ENCODE measurements at regions of chr2 and their contacts with region 1.

Region 1: DNA sequence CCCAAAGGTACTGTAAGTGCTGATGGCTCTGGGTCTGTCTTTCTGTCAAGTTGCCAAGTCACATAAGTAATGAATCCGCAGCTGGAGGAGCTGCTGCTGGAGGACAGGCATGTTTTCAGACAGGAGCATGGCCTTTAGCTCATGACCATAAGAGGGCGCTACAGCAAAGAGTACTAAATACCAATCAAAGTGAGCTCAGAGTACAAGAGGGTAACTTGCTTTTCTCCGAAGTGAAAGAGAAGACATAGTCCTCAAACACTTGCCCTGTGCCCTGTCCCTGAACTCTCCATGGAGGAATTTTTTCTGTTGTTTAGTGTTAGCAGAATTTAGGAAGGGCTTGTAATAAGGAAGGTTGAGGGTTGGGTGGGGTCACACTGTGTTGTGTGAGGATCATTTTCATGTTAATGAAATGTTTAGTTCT is 58.0 kb upstream of the EML6 start:
- DNase-seq: peak; percentile 41 to 63 (median 58)
- H3K4me3 ChIP-seq: no peak overlapping the region
- H3K4me3 Mint-ChIP-seq: no peak overlapping the region
- H3K27ac ChIP-seq: no peak overlapping the region
- H3K27ac Mint-ChIP-seq: peak overlapping the region in 1 of 7 donors; percentile 21
- H3K4me1 ChIP-seq: peaks cover 35% of the 10 kb centered on the region in 2 donors
- H3K4me1 Mint-ChIP-seq: peaks cover 38% of the 10 kb centered on the region
- H3K27me3 ChIP-seq: no peaks in the 10 kb centered on the region
- H3K27me3 Mint-ChIP-seq: peaks cover 0 to 2% (median 0%) of the 10 kb centered on the region in 3 donors
- CTCF ChIP-seq: peak; percentile 81

Region 2: GRCh38 chr2:54558188-54559005 is 107.0 kb before region 1 on chr2:
- intact Hi-C with region 1: no loop called
- DNase-seq: peak; percentile 37 to 55 (median 50)
- H3K4me3 ChIP-seq: peak overlapping the region; percentile 58 to 87 (median 82)
- H3K4me3 Mint-ChIP-seq: peak overlapping the region; percentile 97 to 98
- H3K27ac ChIP-seq: peak overlapping the region; percentile 34 to 92
- H3K27ac Mint-ChIP-seq: peak overlapping the region; percentile 2 to 99 (median 94)
- H3K4me1 ChIP-seq: peaks cover 31 to 44% of the 10 kb centered on the region in 2 donors
- H3K4me1 Mint-ChIP-seq: peaks cover 47% of the 10 kb centered on the region
- H3K27me3 ChIP-seq: no peaks in the 10 kb centered on the region
- H3K27me3 Mint-ChIP-seq: peaks cover 1 to 10% (median 8%) of the 10 kb centered on the region in 3 donors
- CTCF ChIP-seq: no peak

Region 3: GRCh38 chr2:54704688-54705605 is 39.5 kb after region 1 on chr2:
- intact Hi-C with region 1: loop called (anchors 5 kb)
- DNase-seq: peak; percentile 44 to 54 (median 54)
- H3K4me3 ChIP-seq: no peak overlapping the region
- H3K4me3 Mint-ChIP-seq: no peak overlapping the region
- H3K27ac ChIP-seq: no peak overlapping the region
- H3K27ac Mint-ChIP-seq: no peak overlapping the region
- H3K4me1 ChIP-seq: peaks cover 11 to 15% of the 10 kb centered on the region in 2 donors
- H3K4me1 Mint-ChIP-seq: peaks cover 15% of the 10 kb centered on the region
- H3K27me3 ChIP-seq: peaks cover 11 to 25% of the 10 kb centered on the region in 2 donors
- H3K27me3 Mint-ChIP-seq: peaks cover 26 to 28% (median 26%) of the 10 kb centered on the region in 3 donors
- CTCF ChIP-seq: peak; percentile 78

Region 4: GRCh38 chr2:54824567-54824966 is 159.1 kb after region 1 on chr2:
- intact Hi-C with region 1: no loop called
- DNase-seq: no peak
- H3K4me3 ChIP-seq: no peak overlapping the region
- H3K4me3 Mint-ChIP-seq: no peak overlapping the region
- H3K27ac ChIP-seq: no peak overlapping the region
- H3K27ac Mint-ChIP-seq: no peak overlapping the region
- H3K4me1 ChIP-seq: no peaks in the 10 kb centered on the region
- H3K4me1 Mint-ChIP-seq: peaks cover 4% of the 10 kb centered on the region
- H3K27me3 ChIP-seq: no peaks in the 10 kb centered on the region
- H3K27me3 Mint-ChIP-seq: peaks cover 2 to 4% (median 2%) of the 10 kb centered on the region in 3 donors
- CTCF ChIP-seq: no peak

Region 5: GRCh38 chr2:54838585-54839035 is 173.2 kb after region 1 on chr2:
- intact Hi-C with region 1: loop called (anchors 5 kb)
- DNase-seq: peak; percentile 30 to 49 (median 44)
- H3K4me3 ChIP-seq: no peak overlapping the region
- H3K4me3 Mint-ChIP-seq: no peak overlapping the region
- H3K27ac ChIP-seq: no peak overlapping the region
- H3K27ac Mint-ChIP-seq: no peak overlapping the region
- H3K4me1 ChIP-seq: no peaks in the 10 kb centered on the region
- H3K4me1 Mint-ChIP-seq: peaks cover 4% of the 10 kb centered on the region
- H3K27me3 ChIP-seq: no peaks in the 10 kb centered on the region
- H3K27me3 Mint-ChIP-seq: no peaks in the 10 kb centered on the region
- CTCF ChIP-seq: peak; percentile 88

Region 6: GRCh38 chr2:55175254-55176025 is 510.0 kb after region 1 on chr2:
- intact Hi-C with region 1: loop called in 1 of 2 experiments (anchors 5 kb)
- DNase-seq: peak; percentile 35 to 59 (median 56)
- H3K4me3 ChIP-seq: no peak overlapping the region
- H3K4me3 Mint-ChIP-seq: no peak overlapping the region
- H3K27ac ChIP-seq: no peak overlapping the region
- H3K27ac Mint-ChIP-seq: no peak overlapping the region
- H3K4me1 ChIP-seq: no peaks in the 10 kb centered on the region
- H3K4me1 Mint-ChIP-seq: peaks cover 6% of the 10 kb centered on the region
- H3K27me3 ChIP-seq: no peaks in the 10 kb centered on the region
- H3K27me3 Mint-ChIP-seq: peaks cover 0 to 2% (median 0%) of the 10 kb centered on the region in 3 donors
- CTCF ChIP-seq: peak; percentile 76